Natural killer cell (primary cell): ENCODE measurements at regions of chr3 and their contacts with region 1.

Region 1: DNA sequence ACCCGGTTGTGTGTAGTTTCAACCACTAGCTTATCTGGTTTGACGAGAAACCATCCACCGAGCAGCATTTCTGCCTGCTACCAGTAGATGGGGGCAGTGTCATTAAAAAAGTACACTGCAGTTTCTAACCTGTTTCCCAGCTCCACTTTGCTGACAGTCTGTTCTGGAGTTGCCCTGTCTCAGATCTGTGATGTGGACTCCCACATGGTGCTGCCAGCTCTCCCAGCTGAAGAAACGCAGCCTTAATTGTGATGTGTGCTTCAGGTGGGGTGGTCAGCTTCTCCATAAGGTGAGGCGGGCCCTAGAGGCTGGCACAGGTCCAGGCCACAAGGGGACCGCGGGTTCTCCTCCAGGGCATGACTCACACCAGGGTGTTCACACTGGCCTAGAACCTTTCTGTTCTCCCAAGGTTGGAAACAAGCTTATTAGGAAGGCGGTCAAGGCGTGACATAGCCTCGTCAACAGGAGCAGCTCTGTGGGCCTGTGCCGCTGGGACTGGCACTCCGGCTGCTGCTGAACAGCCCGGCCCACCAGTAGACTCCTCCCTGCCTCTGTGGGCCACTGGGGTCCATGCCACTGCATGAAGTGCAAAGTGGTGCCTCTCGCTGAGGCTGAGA is 2.9 kb upstream of the FAM43A start:
- DNase-seq: peak; percentile 52 to 86
- ATAC-seq: peak; percentile 64 to 79 (median 64)
- H3K4me3 ChIP-seq: no peak overlapping the region
- H3K4me3 Mint-ChIP-seq: no peak overlapping the region
- H3K27ac ChIP-seq: no peak overlapping the region
- H3K27ac Mint-ChIP-seq: peak overlapping the region; percentile 57 to 73
- H3K4me1 ChIP-seq: peaks cover 29% of the 10 kb centered on the region
- H3K4me1 Mint-ChIP-seq: peaks cover 32 to 35% of the 10 kb centered on the region in 2 donors
- H3K27me3 ChIP-seq: no peaks in the 10 kb centered on the region
- H3K27me3 Mint-ChIP-seq: no peaks in the 10 kb centered on the region
- CTCF ChIP-seq: peak; percentile 77

Region 2: GRCh38 chr3:194654443-194654842 is 28.4 kb before region 1 on chr3:
- intact Hi-C with region 1: no loop called
- DNase-seq: no peak
- ATAC-seq: no peak
- H3K4me3 ChIP-seq: no peak overlapping the region
- H3K4me3 Mint-ChIP-seq: no peak overlapping the region
- H3K27ac ChIP-seq: no peak overlapping the region
- H3K27ac Mint-ChIP-seq: no peak overlapping the region
- H3K4me1 ChIP-seq: no peaks in the 10 kb centered on the region
- H3K4me1 Mint-ChIP-seq: peaks cover 0 to 6% of the 10 kb centered on the region in 2 donors
- H3K27me3 ChIP-seq: no peaks in the 10 kb centered on the region
- H3K27me3 Mint-ChIP-seq: no peaks in the 10 kb centered on the region
- CTCF ChIP-seq: no peak

Region 3: GRCh38 chr3:194671900-194672808 is 10.6 kb before region 1 on chr3 and contains the start of gene LSG1:
- intact Hi-C with region 1: loop called (anchors 2 kb)
- DNase-seq: peak; percentile 87 to 97
- ATAC-seq: peak; percentile 96
- H3K4me3 ChIP-seq: peak within 1 kb of the TSS; percentile 97
- H3K4me3 Mint-ChIP-seq: peak within 1 kb of the TSS; percentile 98
- H3K27ac ChIP-seq: peak within 1 kb of the TSS; percentile 98
- H3K27ac Mint-ChIP-seq: peak within 1 kb of the TSS; percentile 98 to 99
- H3K4me1 ChIP-seq: peaks cover 14% of the 10 kb centered on the region
- H3K4me1 Mint-ChIP-seq: peaks cover 29 to 40% of the 10 kb centered on the region in 2 donors
- H3K27me3 ChIP-seq: no peaks in the 10 kb centered on the region
- H3K27me3 Mint-ChIP-seq: peaks cover 0 to 6% of the 10 kb centered on the region in 2 donors
- CTCF ChIP-seq: no peak
- total RNA-seq, gene LSG1: 56.4 to 67.6 (median 64.9) TPM

Region 4: GRCh38 chr3:194769020-194769643 is 86.3 kb after region 1 on chr3:
- intact Hi-C with region 1: loop called (anchors 1 kb)
- DNase-seq: peak; percentile 83 to 97
- ATAC-seq: peak; percentile 95 to 99 (median 96)
- H3K4me3 ChIP-seq: peak overlapping the region; percentile 38
- H3K4me3 Mint-ChIP-seq: peak overlapping the region; percentile 88
- H3K27ac ChIP-seq: peak overlapping the region; percentile 66
- H3K27ac Mint-ChIP-seq: peak overlapping the region; percentile 73 to 93
- H3K4me1 ChIP-seq: peaks cover 26% of the 10 kb centered on the region
- H3K4me1 Mint-ChIP-seq: peaks cover 35% of the 10 kb centered on the region in 2 donors
- H3K27me3 ChIP-seq: no peaks in the 10 kb centered on the region
- H3K27me3 Mint-ChIP-seq: peaks cover 9 to 14% of the 10 kb centered on the region in 2 donors
- CTCF ChIP-seq: no peak

Region 5: DNA sequence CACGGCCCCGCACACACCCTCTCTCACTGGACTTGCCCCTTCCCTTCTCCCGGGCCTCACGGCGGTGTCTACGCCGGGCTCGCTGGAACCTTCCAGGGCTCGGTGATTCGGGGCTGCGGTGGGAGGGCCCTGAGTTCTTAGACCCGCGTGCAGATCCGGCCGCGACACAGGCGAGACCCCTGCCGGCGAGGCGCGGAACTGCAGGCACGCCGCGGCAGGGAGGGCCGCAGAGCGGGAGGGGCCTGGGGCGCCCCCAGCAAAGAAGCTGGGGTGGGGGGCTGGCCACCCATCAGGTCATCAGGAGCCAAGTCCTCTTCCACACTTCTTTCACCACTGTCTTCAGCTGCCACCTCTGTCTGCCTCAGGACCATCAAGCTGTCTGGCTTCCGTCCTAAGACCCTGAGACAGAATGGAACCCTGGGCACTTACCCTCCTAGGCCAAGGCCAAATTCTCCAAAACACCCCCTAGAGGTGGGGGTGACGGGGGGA is 423.7 kb after region 1 on chr3:
- intact Hi-C with region 1: loop called (anchors 1 kb)
- DNase-seq: peak; percentile 74 to 82
- ATAC-seq: peak; percentile 89 to 99 (median 98)
- H3K4me3 ChIP-seq: no peak overlapping the region
- H3K4me3 Mint-ChIP-seq: peak overlapping the region; percentile 43
- H3K27ac ChIP-seq: no peak overlapping the region
- H3K27ac Mint-ChIP-seq: peak overlapping the region in 1 of 2 donors; percentile 55
- H3K4me1 ChIP-seq: peaks cover 14% of the 10 kb centered on the region
- H3K4me1 Mint-ChIP-seq: peaks cover 12 to 15% of the 10 kb centered on the region in 2 donors
- H3K27me3 ChIP-seq: no peaks in the 10 kb centered on the region
- H3K27me3 Mint-ChIP-seq: no peaks in the 10 kb centered on the region
- CTCF ChIP-seq: peak; percentile 99

Region 6: DNA sequence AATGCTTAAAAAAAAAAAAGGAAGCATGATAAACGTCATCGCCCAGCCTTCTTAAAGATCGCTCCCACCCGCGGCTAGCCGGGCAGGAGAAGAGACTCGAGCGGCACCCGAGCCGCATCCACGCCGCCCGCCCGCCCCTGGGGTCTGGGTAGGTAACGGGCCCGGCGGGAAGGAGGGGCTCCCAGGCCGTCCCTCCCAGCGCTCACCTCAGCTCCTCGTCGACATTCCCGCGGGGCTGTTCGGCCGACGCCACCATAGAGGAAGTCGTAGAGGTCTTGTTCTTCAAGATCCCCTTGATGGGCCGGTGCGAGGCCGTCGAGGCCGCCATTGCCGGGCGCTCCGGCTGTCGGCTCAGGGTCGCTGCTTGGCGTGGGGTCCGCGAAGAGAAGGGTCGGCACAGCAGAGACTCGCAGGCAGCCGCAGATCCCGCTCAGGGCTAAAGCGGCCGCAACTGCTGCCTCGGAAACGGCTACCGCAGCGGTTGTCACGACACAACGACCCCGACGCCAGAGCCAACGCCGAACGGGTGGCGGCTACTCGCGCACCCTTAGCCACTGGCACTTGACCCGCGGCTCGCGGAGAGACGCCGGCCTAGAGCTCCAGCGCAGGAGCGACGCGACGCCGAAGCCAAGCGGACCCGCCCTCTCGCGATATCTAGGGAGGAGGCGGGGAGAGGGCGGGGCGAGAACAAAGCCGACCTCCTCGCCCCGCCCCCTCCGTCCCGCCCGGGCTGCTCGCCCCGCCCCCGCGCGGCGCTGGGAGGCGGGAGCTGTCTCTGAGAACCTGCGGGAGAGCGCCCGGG is 860.1 kb after region 1 on chr3 and contains the start of gene PPP1R2:
- intact Hi-C with region 1: loop called (anchors 5 kb)
- DNase-seq: peak; percentile 94 to 97
- ATAC-seq: peak; percentile 91 to 97 (median 92)
- H3K4me3 ChIP-seq: peak within 1 kb of the TSS; percentile 86
- H3K4me3 Mint-ChIP-seq: peak within 1 kb of the TSS; percentile 89
- H3K27ac ChIP-seq: peak within 1 kb of the TSS; percentile 95
- H3K27ac Mint-ChIP-seq: peak within 1 kb of the TSS; percentile 94 to 95
- H3K4me1 ChIP-seq: peaks cover 55% of the 10 kb centered on the region
- H3K4me1 Mint-ChIP-seq: peaks cover 80 to 84% of the 10 kb centered on the region in 2 donors
- H3K27me3 ChIP-seq: no peaks in the 10 kb centered on the region
- H3K27me3 Mint-ChIP-seq: no peaks in the 10 kb centered on the region
- CTCF ChIP-seq: no peak
- total RNA-seq, gene PPP1R2: 89.8 to 97.3 (median 89.9) TPM